Natural killer cell (primary cell): ENCODE measurements at regions of chr11 and their contacts with region 1.

Region 1: GRCh38 chr11:7427733-7428132 is 57.6 kb upstream of the OLFML1 start:
- DNase-seq: no peak
- ATAC-seq: no peak
- H3K4me3 ChIP-seq: no peak overlapping the region
- H3K4me3 Mint-ChIP-seq: no peak overlapping the region
- H3K27ac ChIP-seq: no peak overlapping the region
- H3K27ac Mint-ChIP-seq: no peak overlapping the region
- H3K4me1 ChIP-seq: no peaks in the 10 kb centered on the region
- H3K4me1 Mint-ChIP-seq: no peaks in the 10 kb centered on the region
- H3K27me3 ChIP-seq: no peaks in the 10 kb centered on the region
- H3K27me3 Mint-ChIP-seq: peaks cover 12 to 44% of the 10 kb centered on the region in 2 donors
- CTCF ChIP-seq: no peak

Region 2: DNA sequence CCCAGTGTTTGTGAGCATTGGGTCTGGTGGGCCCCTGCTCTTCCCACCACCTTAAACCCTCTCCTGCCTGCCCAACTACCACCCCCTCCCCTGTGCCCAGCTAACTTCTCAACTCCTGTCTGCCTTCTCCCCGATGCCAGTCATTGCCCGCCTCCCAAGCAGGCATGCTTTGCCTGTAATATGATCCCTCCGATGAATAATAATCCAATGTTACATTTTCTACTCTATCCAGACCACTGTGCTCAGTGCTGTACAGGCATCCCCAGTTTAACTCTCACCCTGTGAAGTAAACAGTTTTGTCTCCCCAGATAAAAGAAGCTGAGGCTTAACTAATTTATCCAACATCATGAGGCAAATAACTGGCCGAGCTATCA is 22.1 kb after region 1 on chr11:
- intact Hi-C with region 1: loop called (anchors 1 kb)
- DNase-seq: no peak
- ATAC-seq: no peak
- H3K4me3 ChIP-seq: no peak overlapping the region
- H3K4me3 Mint-ChIP-seq: no peak overlapping the region
- H3K27ac ChIP-seq: no peak overlapping the region
- H3K27ac Mint-ChIP-seq: no peak overlapping the region
- H3K4me1 ChIP-seq: no peaks in the 10 kb centered on the region
- H3K4me1 Mint-ChIP-seq: no peaks in the 10 kb centered on the region
- H3K27me3 ChIP-seq: no peaks in the 10 kb centered on the region
- H3K27me3 Mint-ChIP-seq: peaks cover 0 to 6% of the 10 kb centered on the region in 2 donors
- CTCF ChIP-seq: no peak